H1 (cell line): ENCODE measurements at regions of chr15 and their contacts with region 1.

Region 1: GRCh38 chr15:73908030-73908821 is 18.0 kb upstream of the LOXL1 start:
- DNase-seq: peak in 1 of 2 experiments; percentile 97
- H3K4me3 ChIP-seq: no peak overlapping the region
- H3K27ac ChIP-seq: no peak overlapping the region
- H3K4me1 ChIP-seq: peaks cover 0 to 5% (median 0%) of the 10 kb centered on the region in 4 experiments; a peak in 1 of 7 replicates
- H3K27me3 ChIP-seq: no peaks in the 10 kb centered on the region
- CTCF ChIP-seq: peak; percentile 96 to 98 (median 96)
- EP300 ChIP-seq: no peak
- POLR2A ChIP-seq: no peak
- RAD21 ChIP-seq: peak; percentile 94

Region 2: DNA sequence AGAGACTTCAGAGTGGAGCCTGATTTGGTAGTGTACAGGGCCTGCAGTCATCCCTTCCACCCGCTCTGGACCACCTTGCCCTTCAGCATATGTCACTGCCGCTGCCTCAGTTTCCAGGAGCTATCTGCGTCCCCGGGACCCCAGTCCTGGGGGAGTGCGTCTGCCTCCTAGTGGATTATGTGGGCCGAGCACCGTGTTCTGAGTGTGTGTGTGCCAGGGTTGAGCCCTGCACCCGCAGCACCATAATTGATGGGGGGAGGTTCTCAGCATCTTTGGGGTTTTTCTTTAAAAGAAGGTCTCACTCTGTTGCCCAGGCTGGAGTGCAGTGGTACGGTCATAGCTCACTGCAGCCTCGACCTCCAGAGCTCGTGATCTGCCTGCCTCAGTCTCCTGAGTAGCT is 190.4 kb before region 1 on chr15:
- CTCF ChIA-PET with region 1: interaction called, 20 read pairs
- POLR2A ChIA-PET with region 1: no interaction called
- DNase-seq: no peak
- H3K4me3 ChIP-seq: no peak overlapping the region
- H3K27ac ChIP-seq: no peak overlapping the region
- H3K4me1 ChIP-seq: peaks cover 0 to 4% (median 0%) of the 10 kb centered on the region in 4 experiments; a peak in 1 of 7 replicates
- H3K27me3 ChIP-seq: no peaks in the 10 kb centered on the region
- CTCF ChIP-seq: peak; percentile 50 to 57 (median 53)
- EP300 ChIP-seq: no peak
- POLR2A ChIP-seq: no peak
- RAD21 ChIP-seq: peak; percentile 28 to 56; a peak in 3 of 4 replicates

Region 3: GRCh38 chr15:73794443-73795133 is 113.6 kb before region 1 on chr15:
- CTCF ChIA-PET with region 1: no interaction called
- POLR2A ChIA-PET with region 1: no interaction called
- DNase-seq: no peak
- H3K4me3 ChIP-seq: no peak overlapping the region
- H3K27ac ChIP-seq: no peak overlapping the region
- H3K4me1 ChIP-seq: peaks cover 0 to 9% (median under 1%) of the 10 kb centered on the region in 4 experiments; a peak in 3 of 7 replicates
- H3K27me3 ChIP-seq: no peaks in the 10 kb centered on the region; a peak in 1 of 7 replicates
- CTCF ChIP-seq: no peak
- EP300 ChIP-seq: no peak
- POLR2A ChIP-seq: no peak
- RAD21 ChIP-seq: no peak

Region 4: GRCh38 chr15:73879420-73879819 is 28.8 kb before region 1 on chr15:
- CTCF ChIA-PET with region 1: interaction called, 113 read pairs
- POLR2A ChIA-PET with region 1: interaction called, 3 read pairs
- DNase-seq: no peak
- H3K4me3 ChIP-seq: no peak overlapping the region
- H3K27ac ChIP-seq: no peak overlapping the region
- H3K4me1 ChIP-seq: no peaks in the 10 kb centered on the region; a peak in 1 of 7 replicates
- H3K27me3 ChIP-seq: no peaks in the 10 kb centered on the region
- CTCF ChIP-seq: no peak
- EP300 ChIP-seq: no peak
- POLR2A ChIP-seq: no peak
- RAD21 ChIP-seq: no peak

Region 5: DNA sequence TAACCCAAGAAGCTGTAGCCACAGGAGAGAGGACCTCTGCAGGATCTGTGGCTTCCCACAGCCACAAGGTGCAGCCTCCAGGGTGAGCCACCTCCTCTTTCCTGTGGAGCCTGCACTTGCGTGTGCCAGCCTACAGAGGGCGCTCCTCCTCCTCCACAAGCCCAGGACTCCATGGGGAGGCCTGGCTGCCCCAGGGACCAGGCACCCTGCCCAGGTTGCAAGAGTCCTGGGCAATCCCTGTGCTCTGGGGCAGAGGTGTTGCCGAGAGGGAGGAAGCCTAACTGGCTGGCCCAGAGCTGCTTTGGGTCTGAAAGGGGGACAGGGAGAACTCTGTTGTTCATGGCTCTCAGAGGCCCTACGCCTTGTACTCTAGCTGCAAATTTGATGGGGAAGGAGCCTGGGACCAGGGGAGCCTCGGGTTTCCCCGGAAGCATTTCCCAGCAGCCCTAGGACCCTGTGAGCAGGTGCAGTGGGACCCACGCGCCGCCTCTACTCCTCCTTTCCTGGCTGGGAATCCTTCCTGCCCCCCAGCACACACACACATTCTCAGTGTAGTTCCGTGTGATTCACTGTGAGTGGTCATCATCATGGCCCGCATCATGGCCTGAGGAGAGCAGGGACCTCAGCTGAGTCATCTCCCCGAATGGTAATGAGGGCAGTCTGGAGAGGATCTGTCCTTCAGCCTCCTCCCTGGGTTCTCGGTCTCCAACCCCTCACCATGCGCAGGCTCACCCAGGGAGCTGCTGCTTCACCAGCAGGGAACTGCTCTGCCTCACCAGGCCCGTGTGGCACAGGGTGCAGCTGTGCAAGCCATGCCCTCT is 10.6 kb before region 1 on chr15:
- CTCF ChIA-PET with region 1: interaction called, 167 read pairs
- POLR2A ChIA-PET with region 1: no interaction called
- DNase-seq: peak; percentile 44 to 85
- H3K4me3 ChIP-seq: no peak overlapping the region
- H3K27ac ChIP-seq: no peak overlapping the region
- H3K4me1 ChIP-seq: peaks cover 0 to 3% (median 1%) of the 10 kb centered on the region in 4 experiments; a peak in 3 of 7 replicates
- H3K27me3 ChIP-seq: no peaks in the 10 kb centered on the region
- CTCF ChIP-seq: peak; percentile 99 to 100 (median 100)
- EP300 ChIP-seq: no peak
- POLR2A ChIP-seq: no peak
- RAD21 ChIP-seq: peak; percentile 88 to 90

Region 6: DNA sequence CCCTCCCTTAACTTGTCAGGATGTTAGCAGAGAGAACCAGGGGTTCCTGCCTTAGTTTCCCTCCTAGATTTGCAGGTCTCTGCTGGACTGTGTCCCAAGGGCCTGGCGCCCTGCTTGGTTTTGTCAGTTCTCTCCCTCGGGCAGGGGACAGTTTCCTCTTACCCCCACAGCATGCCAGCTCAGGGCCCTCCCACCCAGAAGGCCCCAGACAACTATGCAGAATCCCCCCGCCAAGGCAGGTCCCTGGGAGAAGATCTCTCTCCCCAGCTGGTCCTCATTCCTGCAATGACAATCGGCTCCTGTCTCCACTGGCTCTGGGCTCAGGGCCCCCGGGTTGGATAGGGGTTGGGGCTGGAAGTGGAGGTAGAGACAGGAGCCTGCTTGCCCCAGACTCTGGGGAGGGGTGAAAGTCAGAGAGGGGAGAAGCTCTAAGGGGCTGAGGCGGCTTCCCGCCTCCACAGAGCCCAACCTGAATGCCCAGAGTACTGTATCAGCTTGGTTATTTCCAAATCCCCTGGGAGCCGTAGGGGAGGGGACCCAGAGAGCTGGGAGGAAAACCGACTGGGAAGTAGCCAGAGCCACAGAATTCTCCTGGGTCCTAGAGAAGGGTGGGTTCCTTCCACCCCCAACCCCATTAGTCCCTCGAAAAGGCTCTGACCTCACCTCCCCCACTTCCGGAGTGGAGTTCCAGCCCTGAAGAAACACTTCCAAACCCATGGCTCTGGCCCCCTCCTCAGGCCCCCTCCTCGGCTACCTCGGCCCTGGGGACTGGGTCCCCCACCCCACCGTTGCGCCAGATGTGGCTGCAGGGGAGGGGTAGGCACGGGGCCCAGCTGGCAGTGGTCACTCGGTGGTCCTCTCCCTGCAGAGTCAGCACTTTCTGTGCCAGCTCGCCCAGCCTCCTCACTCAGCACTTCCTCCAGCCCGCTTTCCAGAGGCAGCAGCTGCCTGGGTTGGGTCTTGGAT is 14.2 kb after region 1 on chr15:
- CTCF ChIA-PET with region 1: interaction called, 38 read pairs
- POLR2A ChIA-PET with region 1: interaction called, 5 read pairs
- DNase-seq: peak in 1 of 2 experiments; percentile 74
- H3K4me3 ChIP-seq: peak overlapping the region in 1 of 4 experiments; percentile 47; a peak in 3 of 8 replicates
- H3K27ac ChIP-seq: no peak overlapping the region; the same call in 1 of the 2 replicates
- H3K4me1 ChIP-seq: peaks cover 0 to 51% (median 33%) of the 10 kb centered on the region in 4 experiments; a peak in 6 of 7 replicates
- H3K27me3 ChIP-seq: peaks cover 0 to 6% (median 2%) of the 10 kb centered on the region in 4 experiments; a peak in 3 of 7 replicates
- CTCF ChIP-seq: no peak
- EP300 ChIP-seq: no peak
- POLR2A ChIP-seq: no peak
- RAD21 ChIP-seq: no peak

Region 7: DNA sequence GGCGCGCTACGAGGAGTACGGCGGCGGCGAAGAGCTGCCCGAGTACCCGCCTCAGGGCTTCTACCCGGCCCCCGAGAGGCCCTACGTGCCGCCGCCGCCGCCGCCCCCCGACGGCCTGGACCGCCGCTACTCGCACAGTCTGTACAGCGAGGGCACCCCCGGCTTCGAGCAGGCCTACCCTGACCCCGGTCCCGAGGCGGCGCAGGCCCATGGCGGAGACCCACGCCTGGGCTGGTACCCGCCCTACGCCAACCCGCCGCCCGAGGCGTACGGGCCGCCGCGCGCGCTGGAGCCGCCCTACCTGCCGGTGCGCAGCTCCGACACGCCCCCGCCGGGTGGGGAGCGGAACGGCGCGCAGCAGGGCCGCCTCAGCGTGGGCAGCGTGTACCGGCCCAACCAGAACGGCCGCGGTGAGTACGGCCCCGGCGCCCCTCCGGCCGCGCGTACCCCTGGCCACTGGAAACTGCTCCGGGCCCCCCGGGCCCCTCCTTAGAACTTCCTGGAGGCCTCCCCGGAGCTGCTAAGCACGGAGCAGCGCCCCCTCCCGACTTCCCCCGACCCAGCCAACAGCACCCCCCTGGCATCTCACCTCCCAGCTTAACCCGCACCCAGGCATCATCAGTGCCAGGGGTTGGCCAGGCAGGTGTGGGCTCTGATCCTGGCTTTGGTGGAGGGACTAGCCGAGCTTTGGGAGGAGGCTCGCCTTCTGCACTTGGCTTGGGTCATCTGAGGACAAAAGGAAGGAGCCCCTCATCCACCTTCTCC is 19.4 kb after region 1 on chr15:
- CTCF ChIA-PET with region 1: interaction called, 38 read pairs
- POLR2A ChIA-PET with region 1: interaction called, 5 read pairs
- DNase-seq: peak in 1 of 2 experiments; percentile 86
- H3K4me3 ChIP-seq: peak overlapping the region; percentile 35 to 71 (median 53)
- H3K27ac ChIP-seq: no peak overlapping the region
- H3K4me1 ChIP-seq: peaks cover 0 to 35% (median 30%) of the 10 kb centered on the region in 4 experiments; a peak in 6 of 7 replicates
- H3K27me3 ChIP-seq: peaks cover 0 to 6% (median 2%) of the 10 kb centered on the region in 4 experiments; a peak in 3 of 7 replicates
- CTCF ChIP-seq: peak; percentile 33 to 65 (median 47)
- EP300 ChIP-seq: no peak
- POLR2A ChIP-seq: no peak
- RAD21 ChIP-seq: peak in 1 of 2 experiments; percentile 2; a peak in 1 of 4 replicates

Region 8: DNA sequence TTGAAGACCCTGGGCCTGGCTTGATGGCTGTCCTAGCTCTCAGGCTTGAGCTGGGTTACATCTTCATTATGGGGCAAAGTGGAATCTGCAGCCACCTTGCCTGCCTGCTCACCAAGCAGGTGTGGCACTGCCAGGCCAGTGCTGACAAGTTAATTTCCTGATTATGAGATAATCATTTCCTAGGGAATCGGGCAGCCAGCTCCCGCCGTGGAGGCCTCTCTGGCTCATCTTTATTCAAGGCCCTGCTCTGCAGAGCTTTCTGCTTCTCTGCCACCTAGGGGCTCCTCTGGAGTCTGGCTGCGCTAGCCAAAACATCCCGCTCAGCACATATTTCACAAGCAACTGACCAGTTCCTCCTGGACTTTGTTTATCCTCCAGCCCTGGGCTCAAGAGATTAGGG is 28.0 kb after region 1 on chr15:
- CTCF ChIA-PET with region 1: interaction called, 10 read pairs
- POLR2A ChIA-PET with region 1: no interaction called
- DNase-seq: no peak
- H3K4me3 ChIP-seq: no peak overlapping the region
- H3K27ac ChIP-seq: no peak overlapping the region
- H3K4me1 ChIP-seq: peaks cover 0 to 3% (median 2%) of the 10 kb centered on the region in 4 experiments; a peak in 4 of 7 replicates
- H3K27me3 ChIP-seq: no peaks in the 10 kb centered on the region
- CTCF ChIP-seq: peak in 2 of 3 experiments; percentile 9 to 18; a peak in 2 of 4 replicates
- EP300 ChIP-seq: no peak
- POLR2A ChIP-seq: no peak
- RAD21 ChIP-seq: peak in 1 of 2 experiments; percentile 18; a peak in 1 of 4 replicates